Pancreas (tissue), 10 donors: ENCODE measurements at regions of chr19 and their contacts with region 1.

Region 1: DNA sequence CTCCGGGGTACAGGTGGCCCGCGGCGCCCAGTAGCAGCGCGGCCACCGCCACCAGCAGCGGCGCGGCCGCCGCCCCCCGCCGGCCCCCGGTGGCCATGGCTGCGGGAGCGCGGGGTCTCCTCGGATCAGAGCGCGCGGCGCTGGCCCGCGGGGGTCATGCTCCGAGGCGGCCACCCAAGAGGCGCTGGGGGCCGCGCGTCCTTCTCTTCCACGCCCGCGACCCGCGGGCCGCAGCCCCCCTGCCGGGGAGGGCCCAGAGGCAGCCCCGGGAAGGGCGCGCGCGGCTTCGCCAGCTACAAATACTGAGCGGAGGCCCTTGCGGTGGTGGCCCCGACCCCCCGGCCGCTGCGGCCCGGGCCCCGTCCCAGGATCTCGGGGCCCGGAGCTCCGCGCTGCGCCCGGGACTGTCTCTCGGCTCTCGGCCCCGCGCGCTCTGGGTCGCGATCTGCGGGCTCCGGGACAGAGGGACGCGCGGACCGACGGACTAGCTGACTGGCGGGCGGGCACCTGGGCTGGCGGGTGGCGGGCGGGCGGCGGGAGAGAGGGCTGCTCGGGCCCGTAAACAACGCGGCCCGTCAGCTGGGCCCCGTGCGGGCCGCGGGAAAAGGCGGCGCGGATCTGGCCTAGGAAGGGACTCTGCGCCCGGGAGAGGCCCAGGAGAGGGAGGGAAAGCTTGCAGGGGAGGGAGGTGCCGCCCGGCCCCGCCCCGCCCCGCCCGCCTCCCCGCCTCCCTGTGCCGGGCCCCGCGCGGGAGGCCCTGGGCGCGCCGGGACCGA is at the start of gene INSR:
- DNase-seq: peak; percentile 90 to 97 (median 94)
- ATAC-seq: peak; percentile 84 to 89 (median 84)
- H3K4me3 ChIP-seq: peak within 1 kb of the TSS; percentile 79 to 99 (median 96)
- H3K27ac ChIP-seq: peak within 1 kb of the TSS; percentile 98 to 99 (median 98)
- H3K4me1 ChIP-seq: peaks cover 0 to 9% (median 4%) of the 10 kb centered on the region in 3 donors
- H3K27me3 ChIP-seq: no peaks in the 10 kb centered on the region
- CTCF ChIP-seq: no peak
- total RNA-seq, gene INSR: 90.5 to 205 (median 129) TPM

Region 2: DNA sequence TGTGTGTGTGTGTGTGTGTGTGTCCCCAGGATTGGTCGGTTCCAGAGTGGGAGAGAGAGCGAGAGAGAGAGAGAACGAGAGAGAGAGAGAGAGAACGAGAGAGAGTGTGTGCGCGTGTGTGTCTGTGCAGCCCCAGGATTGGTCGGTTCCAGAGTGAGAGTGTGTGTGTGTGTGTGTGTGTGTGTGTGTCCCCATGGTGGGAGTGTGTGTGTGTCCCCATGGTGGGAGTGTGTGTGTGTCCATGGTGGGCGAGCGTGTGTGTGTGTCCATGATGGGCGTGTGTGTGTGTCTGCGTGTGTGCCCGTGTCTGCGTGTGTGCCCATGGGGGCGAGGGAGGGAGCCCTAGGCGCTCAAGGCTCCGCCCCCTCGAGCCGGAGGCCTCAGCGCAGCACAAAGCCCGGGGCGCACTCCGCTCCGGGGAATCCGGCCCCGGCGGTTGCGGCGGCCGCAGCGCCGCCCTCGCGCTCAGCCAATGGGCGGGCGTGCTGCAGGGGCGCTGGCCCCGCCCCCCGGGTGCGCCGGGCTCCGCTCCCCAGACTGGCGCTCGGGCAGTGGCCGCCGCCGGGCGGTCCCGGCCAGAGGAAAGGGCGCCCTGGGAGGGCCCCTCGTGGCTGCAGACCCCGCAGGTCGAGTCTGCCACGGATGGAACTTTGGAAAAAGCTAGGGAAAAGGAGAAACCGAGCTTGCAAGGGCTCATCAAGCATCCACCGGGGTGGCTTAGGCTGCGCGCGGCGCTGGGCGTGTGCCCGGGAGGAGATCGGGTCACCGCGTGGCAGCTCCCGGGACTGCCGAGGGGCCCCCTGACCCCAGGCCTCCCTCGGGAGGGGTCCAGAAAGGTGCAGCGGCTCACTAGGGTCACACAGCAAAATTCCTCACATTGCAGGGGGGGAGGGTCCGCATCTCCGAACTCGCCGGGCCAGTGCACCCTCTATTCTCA is 96.0 kb before region 1 on chr19:
- intact Hi-C with region 1: loop called in 2 of 3 experiments (anchors 5 to 10 kb)
- DNase-seq: peak; percentile 89 to 97 (median 94)
- ATAC-seq: peak; percentile 77 to 88 (median 84)
- H3K4me3 ChIP-seq: peak overlapping the region; percentile 47 to 71 (median 62)
- H3K27ac ChIP-seq: peak overlapping the region; percentile 77 to 93 (median 90)
- H3K4me1 ChIP-seq: peaks cover 16 to 43% (median 36%) of the 10 kb centered on the region in 3 donors
- H3K27me3 ChIP-seq: no peaks in the 10 kb centered on the region
- CTCF ChIP-seq: peak in 2 of 4 donors; percentile 11 to 31

Region 3: GRCh38 chr19:7211204-7211951 is 82.6 kb before region 1 on chr19:
- intact Hi-C with region 1: loop called in 1 of 3 experiments (anchors 5 kb)
- DNase-seq: peak; percentile 78 to 95 (median 91)
- ATAC-seq: peak; percentile 68 to 82 (median 75)
- H3K4me3 ChIP-seq: no peak overlapping the region
- H3K27ac ChIP-seq: peak overlapping the region; percentile 73 to 93 (median 85)
- H3K4me1 ChIP-seq: peaks cover 44 to 69% (median 64%) of the 10 kb centered on the region in 3 donors
- H3K27me3 ChIP-seq: no peaks in the 10 kb centered on the region
- CTCF ChIP-seq: no peak

Region 4: DNA sequence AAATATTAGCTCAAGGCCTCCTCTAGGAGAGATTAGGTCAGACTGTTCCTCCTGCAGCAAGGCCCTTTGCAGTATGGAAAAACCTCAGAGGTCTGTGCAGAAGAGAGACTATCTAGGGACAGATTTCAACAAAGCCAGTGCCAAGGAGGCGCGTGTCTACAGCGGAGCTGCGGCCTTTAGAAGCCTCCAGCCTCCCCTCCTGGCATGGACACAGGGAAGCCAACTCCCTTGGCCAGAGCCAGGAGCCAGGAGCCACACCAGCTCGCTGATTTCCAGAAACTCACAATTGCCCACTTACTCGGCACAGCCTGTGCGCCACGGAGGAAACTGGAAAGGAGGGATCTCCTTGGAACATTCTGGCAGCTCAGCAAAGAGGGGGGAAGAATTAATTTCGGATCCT is 63.2 kb before region 1 on chr19:
- intact Hi-C with region 1: no loop called
- DNase-seq: peak in 4 of 6 donors; percentile 58 to 67 (median 64)
- ATAC-seq: peak; percentile 55 to 82 (median 76)
- H3K4me3 ChIP-seq: no peak overlapping the region
- H3K27ac ChIP-seq: peak overlapping the region in 2 of 4 donors; percentile 18 to 36
- H3K4me1 ChIP-seq: peaks cover 17 to 35% (median 28%) of the 10 kb centered on the region in 3 donors
- H3K27me3 ChIP-seq: no peaks in the 10 kb centered on the region
- CTCF ChIP-seq: no peak

Region 5: DNA sequence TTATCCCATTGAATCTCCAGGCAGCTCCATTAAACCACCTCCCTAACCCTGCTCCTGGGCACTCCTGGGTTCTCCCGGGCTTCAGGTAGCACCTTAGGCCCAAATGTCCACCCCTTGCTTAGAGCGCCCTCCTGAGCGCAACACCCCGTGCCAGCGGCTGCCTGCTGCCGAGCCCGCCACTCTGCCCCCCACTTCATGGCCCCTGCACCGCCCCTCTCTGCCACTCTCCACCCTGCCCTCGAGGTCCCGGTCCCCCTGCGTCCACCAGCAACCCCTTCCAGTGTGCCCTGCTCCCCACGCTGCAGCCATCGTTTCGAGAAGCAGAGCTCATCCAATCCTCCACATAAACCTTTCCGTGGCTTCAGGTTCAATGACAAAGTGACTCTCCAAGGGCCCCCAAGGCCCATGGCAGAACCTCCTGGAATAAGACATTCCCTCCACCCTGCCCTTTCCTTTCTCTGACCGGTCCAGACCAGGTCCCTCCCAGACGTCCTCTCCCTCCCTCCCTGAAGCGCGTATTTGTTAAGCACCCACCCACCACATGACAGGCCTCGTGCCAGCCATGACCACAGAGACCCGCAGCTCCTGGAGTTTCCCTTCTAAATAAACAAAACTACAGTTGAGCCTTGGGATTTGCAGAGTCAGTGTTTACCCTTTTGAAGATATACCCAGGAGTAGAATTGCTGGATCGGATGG is 121.3 kb after region 1 on chr19:
- intact Hi-C with region 1: no loop called
- DNase-seq: peak in 5 of 6 donors; percentile 40 to 81 (median 49)
- ATAC-seq: peak; percentile 41 to 87 (median 80)
- H3K4me3 ChIP-seq: no peak overlapping the region
- H3K27ac ChIP-seq: peak overlapping the region in 3 of 4 donors; percentile 4 to 80 (median 75)
- H3K4me1 ChIP-seq: peaks cover 0 to 17% (median 14%) of the 10 kb centered on the region in 3 donors
- H3K27me3 ChIP-seq: no peaks in the 10 kb centered on the region
- CTCF ChIP-seq: no peak

Region 6: GRCh38 chr19:7506385-7507328 is 212.7 kb after region 1 on chr19:
- intact Hi-C with region 1: no loop called
- DNase-seq: peak; percentile 84 to 95 (median 91)
- ATAC-seq: peak; percentile 84 to 92 (median 88)
- H3K4me3 ChIP-seq: no peak overlapping the region
- H3K27ac ChIP-seq: no peak overlapping the region
- H3K4me1 ChIP-seq: peaks cover 0 to 8% (median 0%) of the 10 kb centered on the region in 3 donors
- H3K27me3 ChIP-seq: no peaks in the 10 kb centered on the region
- CTCF ChIP-seq: no peak